ENCODE measurements at regions of chr21 and their contacts with region 1.

Region 1: GRCh38 chr21:19440792-19441655 is 1037.4 kb upstream of the TMPRSS15 start:
- DNase-seq: no peak
- ATAC-seq: peak; percentile 74
- H3K4me3 ChIP-seq: no peak overlapping the region
- H3K27ac ChIP-seq: no peak overlapping the region
- H3K4me1 ChIP-seq: no peaks in the 10 kb centered on the region
- H3K27me3 ChIP-seq: no peaks in the 10 kb centered on the region
- CTCF ChIP-seq: no peak
- EP300 ChIP-seq: no peak
- POLR2A ChIP-seq: no peak
- RAD21 ChIP-seq: no peak

Region 2: DNA sequence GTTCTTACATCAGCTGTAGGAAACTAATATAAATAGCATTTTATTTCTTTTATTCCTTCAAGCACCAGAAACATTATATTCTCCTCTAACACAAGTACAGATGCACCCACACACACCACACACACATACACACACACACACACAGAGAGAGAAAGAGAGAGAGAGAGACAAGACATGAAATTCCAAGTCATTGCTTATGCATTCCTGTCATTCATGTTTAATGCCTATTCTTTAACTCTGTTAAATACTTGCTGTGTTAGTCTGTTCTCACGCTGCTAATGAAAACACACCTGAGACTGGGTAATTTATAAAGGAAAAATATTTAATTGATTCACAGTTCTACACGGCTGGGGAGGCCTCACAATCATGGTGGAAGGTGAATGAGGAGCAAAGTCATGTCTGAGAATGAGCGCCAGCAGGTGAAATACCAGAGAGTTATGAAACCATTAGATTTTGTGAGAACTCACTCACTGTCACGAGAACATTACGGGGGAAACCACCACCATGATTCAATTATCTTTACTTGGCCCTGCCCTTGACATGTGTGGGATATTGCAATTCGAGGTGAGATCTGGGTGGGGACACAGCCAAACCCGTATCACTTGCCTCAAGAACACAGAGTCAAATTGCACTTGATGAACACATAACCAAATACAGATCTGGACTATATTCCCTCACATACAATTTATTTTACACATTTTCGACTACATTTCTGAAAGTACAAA is 20.6 kb after region 1 on chr21:
- CTCF ChIA-PET with region 1: no interaction called
- POLR2A ChIA-PET with region 1: no interaction called
- RAD21 ChIA-PET with region 1: interaction called, 4 read pairs
- SMC1A ChIA-PET with region 1: interaction called, 11 read pairs
- in situ Hi-C with region 1: no loop called
- intact Hi-C with region 1: no loop called
- DNase-seq: no peak
- ATAC-seq: peak; percentile 69
- H3K4me3 ChIP-seq: no peak overlapping the region
- H3K27ac ChIP-seq: no peak overlapping the region
- H3K4me1 ChIP-seq: no peaks in the 10 kb centered on the region
- H3K27me3 ChIP-seq: no peaks in the 10 kb centered on the region
- CTCF ChIP-seq: no peak
- EP300 ChIP-seq: no peak
- POLR2A ChIP-seq: no peak
- RAD21 ChIP-seq: no peak

Region 3: GRCh38 chr21:19475525-19475924 is 34.5 kb after region 1 on chr21:
- CTCF ChIA-PET with region 1: no interaction called
- POLR2A ChIA-PET with region 1: no interaction called
- RAD21 ChIA-PET with region 1: no interaction called
- SMC1A ChIA-PET with region 1: no interaction called
- in situ Hi-C with region 1: no loop called
- intact Hi-C with region 1: no loop called
- DNase-seq: no peak
- ATAC-seq: no peak
- H3K4me3 ChIP-seq: no peak overlapping the region
- H3K27ac ChIP-seq: no peak overlapping the region
- H3K4me1 ChIP-seq: no peaks in the 10 kb centered on the region
- H3K27me3 ChIP-seq: no peaks in the 10 kb centered on the region
- CTCF ChIP-seq: no peak
- EP300 ChIP-seq: no peak
- POLR2A ChIP-seq: no peak
- RAD21 ChIP-seq: no peak

Region 4: GRCh38 chr21:19523746-19524145 is 82.7 kb after region 1 on chr21:
- CTCF ChIA-PET with region 1: no interaction called
- POLR2A ChIA-PET with region 1: no interaction called
- RAD21 ChIA-PET with region 1: no interaction called
- SMC1A ChIA-PET with region 1: no interaction called
- in situ Hi-C with region 1: no loop called
- intact Hi-C with region 1: no loop called
- DNase-seq: no peak
- ATAC-seq: no peak
- H3K4me3 ChIP-seq: no peak overlapping the region
- H3K27ac ChIP-seq: no peak overlapping the region
- H3K4me1 ChIP-seq: no peaks in the 10 kb centered on the region
- H3K27me3 ChIP-seq: no peaks in the 10 kb centered on the region
- CTCF ChIP-seq: no peak
- EP300 ChIP-seq: no peak
- POLR2A ChIP-seq: no peak
- RAD21 ChIP-seq: no peak

Measured in GM12878 (cell line).